Cardiac septum (tissue), 1 donor: ENCODE measurements at regions of chr2 and their contacts with region 1.

Region 1: DNA sequence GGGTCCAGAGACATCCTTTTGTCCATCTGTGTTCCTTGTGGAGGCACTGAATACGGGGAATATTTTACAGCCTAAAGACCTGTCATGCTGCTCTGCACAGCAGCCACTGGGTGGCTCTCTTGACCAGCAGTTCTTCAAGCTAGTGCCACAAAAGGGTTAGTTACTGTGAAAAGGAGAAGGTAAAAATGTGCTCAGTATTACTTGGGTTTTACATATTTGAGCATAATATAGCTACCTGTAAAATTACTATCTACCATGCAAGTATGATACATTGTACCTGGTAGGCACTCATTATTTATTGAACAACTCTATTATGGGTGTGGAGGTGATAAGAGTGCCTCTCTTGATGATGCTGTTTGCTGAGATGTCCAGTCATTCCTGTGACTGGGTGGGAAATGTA is 23.6 kb downstream of the FZD5 start:
- DNase-seq: no peak

Region 2: DNA sequence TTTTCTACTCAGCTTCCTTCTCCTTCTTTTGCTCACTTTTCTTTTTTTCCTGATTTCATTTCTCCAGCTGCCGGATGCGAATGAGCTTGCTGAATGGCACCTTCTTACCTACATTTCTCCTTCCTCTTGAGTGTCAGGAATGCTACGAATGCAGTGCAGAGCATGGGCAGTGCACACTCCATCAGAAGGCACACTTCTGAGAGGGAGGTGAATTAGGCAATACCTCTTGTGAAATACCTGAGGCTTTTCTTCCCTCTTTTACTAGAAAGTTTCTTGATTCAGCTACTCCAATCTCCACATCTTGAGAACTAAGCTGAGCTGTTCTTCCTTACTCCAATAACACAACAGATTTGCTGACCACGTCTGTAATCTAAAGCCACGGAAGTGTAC is 228.1 kb after region 1 on chr2:
- intact Hi-C with region 1: loop called (anchors 5 kb)
- DNase-seq: no peak

Region 3: GRCh38 chr2:208040199-208041171 is 294.4 kb after region 1 on chr2:
- intact Hi-C with region 1: loop called (anchors 2 kb)
- DNase-seq: peak; percentile 81

Region 4: GRCh38 chr2:208072250-208072892 is 326.2 kb after region 1 on chr2:
- intact Hi-C with region 1: loop called (anchors 2 kb)
- DNase-seq: no peak